Body of pancreas (tissue), 4 donors: ENCODE measurements at regions of chr6 and their contacts with region 1.

Region 1: GRCh38 chr6:149925974-149926777 is 3.3 kb upstream of the RAET1G start:
- DNase-seq: peak; percentile 90 to 95 (median 92)
- ATAC-seq: peak; percentile 91
- H3K4me3 ChIP-seq: peak overlapping the region; percentile 16 to 24
- H3K27ac ChIP-seq: peak overlapping the region in 1 of 4 donors; percentile 12
- H3K4me1 ChIP-seq: peaks cover 27% of the 10 kb centered on the region
- H3K27me3 ChIP-seq: no peaks in the 10 kb centered on the region
- CTCF ChIP-seq: peak; percentile 89 to 99 (median 98)
- POLR2A ChIP-seq: no peak

Region 2: DNA sequence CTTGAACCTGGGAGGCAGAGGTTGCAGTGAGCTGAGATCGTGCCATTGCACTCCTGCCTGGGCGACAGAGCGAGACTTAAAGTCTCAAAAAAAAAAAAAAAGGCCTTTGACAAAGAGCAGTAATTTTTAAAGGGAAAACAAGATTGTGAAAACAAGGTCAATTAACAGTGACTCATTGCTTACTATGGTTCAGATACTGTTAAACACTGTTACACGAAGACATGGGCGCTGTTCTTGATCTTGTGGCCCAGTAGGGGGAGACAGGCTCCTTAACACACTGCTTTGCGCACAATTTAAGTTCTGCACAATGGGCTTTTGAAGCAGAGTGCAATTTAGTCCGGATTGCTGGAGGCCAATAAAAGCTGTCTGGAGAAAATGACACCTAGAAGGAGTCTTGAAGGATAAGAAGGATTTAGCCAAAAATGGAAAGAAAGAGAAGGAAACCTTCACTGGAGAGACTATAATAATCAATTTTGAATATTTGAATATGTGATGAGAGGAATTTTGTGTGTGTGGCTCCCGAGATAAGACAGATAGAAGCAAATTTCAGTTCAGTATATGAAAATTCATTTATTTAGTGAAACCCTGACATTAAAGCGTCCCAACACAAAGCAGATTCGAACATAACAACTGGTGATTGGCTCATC is 202.3 kb before region 1 on chr6:
- intact Hi-C with region 1: loop called (anchors 10 kb)
- DNase-seq: peak; percentile 51 to 78 (median 70)
- ATAC-seq: peak; percentile 95
- H3K4me3 ChIP-seq: no peak overlapping the region
- H3K27ac ChIP-seq: peak overlapping the region in 2 of 4 donors; percentile 19 to 52
- H3K4me1 ChIP-seq: peaks cover 5% of the 10 kb centered on the region
- H3K27me3 ChIP-seq: no peaks in the 10 kb centered on the region
- CTCF ChIP-seq: peak; percentile 45 to 84 (median 73)
- POLR2A ChIP-seq: no peak

Region 3: DNA sequence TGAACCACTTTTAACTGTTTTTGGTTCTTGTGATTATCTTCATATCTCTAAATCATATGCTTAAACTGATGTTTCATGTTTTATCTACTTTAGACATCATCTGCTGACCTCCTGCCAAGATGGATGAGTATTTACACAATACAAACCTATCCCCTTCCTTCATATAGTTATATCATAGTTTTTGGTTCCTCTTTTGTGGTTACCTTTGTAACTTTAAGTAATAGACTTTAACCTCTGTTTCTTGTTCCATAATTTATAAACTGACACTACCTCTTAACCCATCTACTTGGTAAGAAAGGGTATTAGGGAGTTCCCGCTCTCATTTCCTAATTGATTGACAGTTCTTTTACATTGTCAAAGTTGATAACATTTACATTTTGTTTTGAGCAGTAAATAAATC is 164.7 kb before region 1 on chr6:
- intact Hi-C with region 1: no loop called
- DNase-seq: no peak
- ATAC-seq: no peak
- H3K4me3 ChIP-seq: no peak overlapping the region
- H3K27ac ChIP-seq: no peak overlapping the region
- H3K4me1 ChIP-seq: no peaks in the 10 kb centered on the region
- H3K27me3 ChIP-seq: no peaks in the 10 kb centered on the region
- CTCF ChIP-seq: no peak
- POLR2A ChIP-seq: no peak

Region 4: GRCh38 chr6:149834513-149835481 is 91.4 kb before region 1 on chr6:
- intact Hi-C with region 1: loop called (anchors 5 kb)
- DNase-seq: peak; percentile 57 to 73 (median 64)
- ATAC-seq: peak; percentile 71
- H3K4me3 ChIP-seq: no peak overlapping the region
- H3K27ac ChIP-seq: no peak overlapping the region
- H3K4me1 ChIP-seq: peaks cover under 1% of the 10 kb centered on the region
- H3K27me3 ChIP-seq: no peaks in the 10 kb centered on the region
- CTCF ChIP-seq: peak; percentile 77 to 93 (median 91)
- POLR2A ChIP-seq: no peak

Region 5: DNA sequence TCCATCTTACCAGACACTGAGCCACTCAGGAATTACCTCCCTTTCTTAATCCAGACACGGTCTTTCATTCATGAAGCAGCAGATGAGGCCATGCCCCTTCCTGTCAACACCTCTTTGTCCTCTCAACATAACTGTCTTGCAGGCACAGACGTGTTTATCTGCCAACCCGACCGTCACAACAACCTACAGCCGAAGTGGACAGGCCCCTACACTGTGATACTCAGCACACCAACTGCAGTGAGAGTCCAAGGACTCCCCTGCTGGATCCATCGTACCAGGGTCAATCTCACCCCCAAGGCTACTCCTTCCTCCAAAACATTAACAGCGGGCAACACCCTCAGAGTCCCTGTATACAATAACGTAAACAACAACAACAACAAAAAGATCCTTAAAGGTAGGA is 173.4 kb after region 1 on chr6:
- intact Hi-C with region 1: no loop called
- DNase-seq: no peak
- ATAC-seq: no peak
- H3K4me3 ChIP-seq: no peak overlapping the region
- H3K27ac ChIP-seq: no peak overlapping the region
- H3K4me1 ChIP-seq: no peaks in the 10 kb centered on the region
- H3K27me3 ChIP-seq: no peaks in the 10 kb centered on the region
- CTCF ChIP-seq: no peak
- POLR2A ChIP-seq: no peak